CD8-positive, alpha-beta T cell (primary cell): ENCODE measurements at regions of chr6 and their contacts with region 1.

Region 1: DNA sequence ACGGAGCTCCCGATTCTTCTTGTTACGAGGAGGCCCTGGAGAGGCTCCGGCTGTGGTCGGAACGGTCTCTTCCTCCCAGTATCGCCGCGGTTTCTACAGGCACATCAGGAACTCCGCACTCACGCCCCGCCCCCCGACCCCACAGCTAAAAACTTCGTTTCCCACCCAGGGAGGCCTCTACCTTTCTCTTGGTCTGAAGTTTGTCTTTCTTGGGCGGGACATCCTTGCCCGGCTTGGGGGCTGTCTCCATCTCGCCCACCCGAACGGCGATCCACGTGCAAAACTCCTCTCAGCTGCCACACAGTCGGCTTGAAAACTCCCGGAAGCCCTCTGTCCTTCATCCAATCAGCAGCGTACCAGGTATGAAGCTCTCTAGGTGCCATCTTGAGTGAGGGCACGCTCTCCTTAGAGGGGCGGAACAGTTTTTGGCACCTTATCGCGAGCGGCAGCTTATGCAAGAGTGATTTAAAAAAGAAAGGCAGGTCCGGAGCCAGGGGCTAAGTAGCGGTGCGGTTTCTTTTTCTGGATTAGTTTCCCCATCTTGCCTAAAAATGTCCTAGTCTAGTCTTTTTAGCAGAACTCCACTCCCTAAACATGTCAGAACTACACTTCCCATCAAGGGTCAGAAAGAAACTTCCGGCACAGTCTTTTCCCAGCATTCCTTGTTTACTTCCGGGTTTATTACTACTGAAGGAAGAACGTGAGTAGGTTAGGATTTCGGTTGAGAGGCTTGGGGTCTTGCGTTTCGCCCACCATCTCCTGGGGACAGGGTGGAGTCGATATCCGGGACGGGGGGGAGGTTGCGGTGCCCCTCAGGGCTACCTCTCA is at the starts of genes PFDN6 and WDR46:
- DNase-seq: peak; percentile 64 to 94 (median 84)
- ATAC-seq: peak; percentile 96
- H3K4me3 ChIP-seq: peak within 1 kb of the TSS; percentile 81 to 98
- H3K4me3 Mint-ChIP-seq: peak within 1 kb of the TSS; percentile 99
- H3K27ac ChIP-seq: peak within 1 kb of the TSS; percentile 59 to 82
- H3K27ac Mint-ChIP-seq: peak within 1 kb of the TSS; percentile 88
- H3K4me1 ChIP-seq: peaks cover 25% of the 10 kb centered on the region
- H3K4me1 Mint-ChIP-seq: peaks cover 41% of the 10 kb centered on the region
- H3K27me3 ChIP-seq: no peaks in the 10 kb centered on the region
- H3K27me3 Mint-ChIP-seq: no peaks in the 10 kb centered on the region
- CTCF ChIP-seq: no peak
- total RNA-seq, gene PFDN6: 9.4 to 11.2 TPM
- total RNA-seq, gene WDR46: 19.9 to 22.1 TPM

Region 2: DNA sequence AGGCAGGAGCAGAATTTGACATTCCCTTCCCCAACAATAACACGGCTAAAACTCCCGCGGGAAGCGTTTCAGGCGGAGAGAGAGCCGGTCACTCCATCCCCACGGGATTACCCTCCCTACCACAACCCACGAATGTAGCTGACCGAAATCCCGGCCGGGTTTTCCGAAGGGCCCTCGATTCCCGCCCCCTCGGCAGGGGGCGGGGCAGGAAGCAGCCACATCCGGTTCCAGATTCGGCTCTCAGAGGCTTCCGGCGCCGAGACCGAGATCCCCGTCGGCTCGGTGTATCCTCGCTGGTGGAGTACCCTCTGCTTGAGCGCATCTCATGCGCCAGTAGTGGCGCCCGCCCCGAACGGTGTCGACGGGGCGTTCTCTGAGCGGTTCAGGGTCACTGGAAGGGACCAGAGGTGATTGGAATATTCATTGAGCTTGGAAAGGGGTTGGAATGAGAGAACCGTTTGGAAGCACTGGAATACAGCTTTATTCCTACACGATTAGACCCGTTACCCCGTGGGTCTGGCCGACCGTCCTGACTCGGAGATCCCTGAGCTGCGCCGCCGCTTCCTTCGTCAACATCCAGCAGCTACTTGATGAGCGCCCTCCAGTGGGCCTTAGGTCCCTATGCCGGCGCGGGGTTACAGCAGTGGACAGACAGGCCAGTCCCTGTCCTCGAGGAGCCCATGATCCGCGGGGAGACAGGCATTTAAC is 10.3 kb after region 1 on chr6:
- CTCF ChIA-PET with region 1: interaction called, 5 read pairs
- POLR2A ChIA-PET with region 1: interaction called, 48 read pairs
- intact Hi-C with region 1: loop called (anchors 1 kb)
- DNase-seq: peak; percentile 82 to 97 (median 94)
- ATAC-seq: peak; percentile 83
- H3K4me3 ChIP-seq: peak overlapping the region; percentile 88 to 91
- H3K4me3 Mint-ChIP-seq: peak overlapping the region; percentile 99
- H3K27ac ChIP-seq: peak overlapping the region; percentile 83 to 96
- H3K27ac Mint-ChIP-seq: peak overlapping the region; percentile 99
- H3K4me1 ChIP-seq: peaks cover 14% of the 10 kb centered on the region
- H3K4me1 Mint-ChIP-seq: peaks cover 41% of the 10 kb centered on the region
- H3K27me3 ChIP-seq: no peaks in the 10 kb centered on the region
- H3K27me3 Mint-ChIP-seq: no peaks in the 10 kb centered on the region
- CTCF ChIP-seq: peak; percentile 70

Region 3: GRCh38 chr6:33323623-33323948 is 34.5 kb after region 1 on chr6:
- CTCF ChIA-PET with region 1: interaction called, 3 read pairs
- POLR2A ChIA-PET with region 1: interaction called, 3 read pairs
- intact Hi-C with region 1: loop called (anchors 1 kb)
- DNase-seq: peak in 1 of 9 experiments; percentile 29
- ATAC-seq: no peak
- H3K4me3 ChIP-seq: peak overlapping the region; percentile 85 to 93
- H3K4me3 Mint-ChIP-seq: peak overlapping the region; percentile 96
- H3K27ac ChIP-seq: peak overlapping the region; percentile 83 to 91
- H3K27ac Mint-ChIP-seq: peak overlapping the region; percentile 94
- H3K4me1 ChIP-seq: peaks cover 43% of the 10 kb centered on the region
- H3K4me1 Mint-ChIP-seq: peaks cover 53% of the 10 kb centered on the region
- H3K27me3 ChIP-seq: no peaks in the 10 kb centered on the region
- H3K27me3 Mint-ChIP-seq: no peaks in the 10 kb centered on the region
- CTCF ChIP-seq: no peak

Region 4: DNA sequence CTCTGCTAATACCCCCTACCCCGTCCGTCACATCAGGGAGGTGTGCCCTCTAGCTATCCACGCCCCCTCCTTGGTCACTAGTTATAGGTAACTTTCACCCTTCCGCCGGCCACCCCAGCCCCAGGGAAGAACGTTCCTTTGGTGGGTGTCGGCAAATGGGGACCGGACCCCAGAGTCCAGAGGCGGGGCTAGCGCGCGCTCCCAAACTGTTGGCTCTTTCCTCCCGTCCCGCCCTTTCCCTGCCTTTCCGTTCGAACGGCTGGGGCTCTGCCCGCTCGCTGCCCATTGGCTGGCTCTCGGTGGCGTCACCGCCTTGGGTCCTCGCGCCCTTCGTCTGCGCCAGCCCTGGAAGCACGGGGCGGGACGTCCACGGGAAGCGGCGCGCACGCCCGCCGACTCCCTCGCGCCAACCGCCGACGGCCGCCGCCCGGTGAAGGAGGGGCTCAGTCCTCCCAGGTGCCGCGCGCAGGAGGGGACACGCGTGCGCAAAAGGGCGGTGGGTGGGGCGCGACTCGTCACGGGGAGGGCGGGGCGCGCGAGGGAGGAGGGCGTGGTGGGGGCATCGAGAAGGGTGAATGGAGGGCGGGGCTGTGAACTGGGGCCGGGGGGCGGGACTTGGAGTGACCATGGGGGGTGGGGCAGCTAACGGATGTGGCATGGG is 121.0 kb after region 1 on chr6:
- CTCF ChIA-PET with region 1: no interaction called
- POLR2A ChIA-PET with region 1: no interaction called
- intact Hi-C with region 1: loop called in 1 of 2 experiments (anchors 1 kb)
- DNase-seq: peak; percentile 93 to 99 (median 99)
- ATAC-seq: peak; percentile 68
- H3K4me3 ChIP-seq: peak overlapping the region; percentile 82 to 95
- H3K4me3 Mint-ChIP-seq: peak overlapping the region; percentile 88
- H3K27ac ChIP-seq: peak overlapping the region; percentile 94 to 96
- H3K27ac Mint-ChIP-seq: peak overlapping the region; percentile 91
- H3K4me1 ChIP-seq: peaks cover 40% of the 10 kb centered on the region
- H3K4me1 Mint-ChIP-seq: peaks cover 47% of the 10 kb centered on the region
- H3K27me3 ChIP-seq: no peaks in the 10 kb centered on the region
- H3K27me3 Mint-ChIP-seq: no peaks in the 10 kb centered on the region
- CTCF ChIP-seq: no peak